ENCODE measurements at regions of chr5 and their contacts with region 1.

Region 1: GRCh38 chr5:158676642-158677469 is 422.9 kb downstream of the EBF1 start:
- DNase-seq: no peak
- ATAC-seq: no peak
- H3K4me3 ChIP-seq: no peak overlapping the region
- H3K27ac ChIP-seq: no peak overlapping the region
- H3K4me1 ChIP-seq: peaks cover 0 to 8% (median 0%) of the 10 kb centered on the region in 12 donors
- H3K27me3 ChIP-seq: peaks cover 0 to 6% (median 0%) of the 10 kb centered on the region in 9 donors
- CTCF ChIP-seq: no peak
- POLR2A ChIP-seq: no peak

Region 2: GRCh38 chr5:158629591-158630312 is 47.1 kb before region 1 on chr5:
- intact Hi-C with region 1: loop called in 1 of 10 experiments (anchors 5 kb)
- DNase-seq: no peak
- ATAC-seq: no peak
- H3K4me3 ChIP-seq: no peak overlapping the region
- H3K27ac ChIP-seq: no peak overlapping the region
- H3K4me1 ChIP-seq: no peaks in the 10 kb centered on the region
- H3K27me3 ChIP-seq: no peaks in the 10 kb centered on the region
- CTCF ChIP-seq: no peak
- POLR2A ChIP-seq: no peak

Region 3: GRCh38 chr5:159073026-159073425 is 396.2 kb after region 1 on chr5:
- intact Hi-C with region 1: no loop called
- DNase-seq: no peak
- ATAC-seq: peak in 1 of 4 donors; percentile 53
- H3K4me3 ChIP-seq: no peak overlapping the region
- H3K27ac ChIP-seq: peak overlapping the region in 5 of 12 donors; percentile 3 to 48 (median 17)
- H3K4me1 ChIP-seq: peaks cover 0 to 40% (median 8%) of the 10 kb centered on the region in 12 donors
- H3K27me3 ChIP-seq: no peaks in the 10 kb centered on the region
- CTCF ChIP-seq: no peak
- POLR2A ChIP-seq: no peak

Measured in heart left ventricle (tissue), 16 donors.